CD8-positive, alpha-beta memory T cell (primary cell): ENCODE measurements at regions of chr6 and their contacts with region 1.

Region 1: GRCh38 chr6:142692942-142693341 is 252.0 kb downstream of the HIVEP2 start:
- DNase-seq: peak; percentile 44 to 72 (median 52)
- H3K4me3 ChIP-seq: no peak overlapping the region
- H3K4me3 Mint-ChIP-seq: no peak overlapping the region
- H3K27ac ChIP-seq: no peak overlapping the region
- H3K27ac Mint-ChIP-seq: peak overlapping the region in 3 of 8 donors; percentile 53 to 80 (median 67)
- H3K4me1 ChIP-seq: peaks cover 4% of the 10 kb centered on the region
- H3K4me1 Mint-ChIP-seq: peaks cover 6 to 11% (median 6%) of the 10 kb centered on the region in 3 donors
- H3K27me3 ChIP-seq: no peaks in the 10 kb centered on the region
- H3K27me3 Mint-ChIP-seq: peaks cover 0 to 2% of the 10 kb centered on the region in 2 donors

Region 2: GRCh38 chr6:142952614-142953013 is 259.7 kb after region 1 on chr6:
- CTCF ChIA-PET with region 1: interaction called, 17 read pairs
- POLR2A ChIA-PET with region 1: no interaction called
- DNase-seq: no peak
- H3K4me3 ChIP-seq: no peak overlapping the region
- H3K4me3 Mint-ChIP-seq: no peak overlapping the region
- H3K27ac ChIP-seq: no peak overlapping the region
- H3K27ac Mint-ChIP-seq: peak overlapping the region in 7 of 8 donors; percentile 12 to 84 (median 51)
- H3K4me1 ChIP-seq: peaks cover 8% of the 10 kb centered on the region
- H3K4me1 Mint-ChIP-seq: peaks cover 9 to 19% (median 14%) of the 10 kb centered on the region in 3 donors
- H3K27me3 ChIP-seq: no peaks in the 10 kb centered on the region
- H3K27me3 Mint-ChIP-seq: peaks cover 0 to 1% of the 10 kb centered on the region in 2 donors

Region 3: DNA sequence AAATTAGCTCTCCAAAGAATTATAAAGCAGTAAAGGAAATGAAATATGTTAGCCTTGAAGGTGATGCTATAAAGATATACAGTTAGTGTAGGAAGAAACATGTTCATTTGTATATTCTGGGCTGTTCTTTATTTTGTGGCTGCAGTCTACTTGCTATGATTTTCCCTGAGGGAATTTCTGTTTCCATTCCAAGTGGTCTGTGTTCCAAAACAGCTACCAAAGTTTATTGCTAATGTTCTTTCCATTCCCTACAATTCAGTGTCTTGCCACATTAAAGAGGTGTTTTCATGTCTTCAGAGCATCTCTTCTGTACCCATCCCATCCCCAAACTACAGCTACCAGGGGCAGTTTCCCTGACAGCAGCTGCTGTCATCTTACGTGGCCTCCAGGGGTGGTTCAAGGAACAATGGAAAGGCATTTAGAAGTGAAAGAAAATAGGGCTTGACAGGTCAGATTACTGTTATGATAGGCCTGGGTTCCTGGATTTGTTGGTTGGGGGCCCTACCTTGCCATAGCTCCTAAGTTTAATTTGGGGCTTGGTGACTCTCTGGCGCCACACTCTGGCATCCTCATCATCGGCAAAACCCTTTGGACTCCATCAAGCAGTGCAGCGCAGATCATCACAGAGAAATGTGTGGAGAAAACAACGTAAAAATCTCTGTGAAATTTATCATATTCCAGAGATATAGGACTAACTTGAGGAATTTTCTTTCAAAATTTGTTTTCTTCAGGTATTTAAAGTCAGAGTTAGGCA is 333.9 kb after region 1 on chr6:
- CTCF ChIA-PET with region 1: interaction called, 33 read pairs
- POLR2A ChIA-PET with region 1: no interaction called
- DNase-seq: peak; percentile 20 to 51 (median 35)
- H3K4me3 ChIP-seq: no peak overlapping the region
- H3K4me3 Mint-ChIP-seq: no peak overlapping the region
- H3K27ac ChIP-seq: no peak overlapping the region
- H3K27ac Mint-ChIP-seq: peak overlapping the region in 1 of 8 donors; percentile 89
- H3K4me1 ChIP-seq: no peaks in the 10 kb centered on the region
- H3K4me1 Mint-ChIP-seq: peaks cover 0 to 5% (median 0%) of the 10 kb centered on the region in 3 donors
- H3K27me3 ChIP-seq: no peaks in the 10 kb centered on the region
- H3K27me3 Mint-ChIP-seq: no peaks in the 10 kb centered on the region

Region 4: GRCh38 chr6:143427109-143427817 is 734.3 kb after region 1 on chr6:
- CTCF ChIA-PET with region 1: interaction called, 52 read pairs
- POLR2A ChIA-PET with region 1: no interaction called
- DNase-seq: peak; percentile 55 to 78 (median 63)
- H3K4me3 ChIP-seq: no peak overlapping the region
- H3K4me3 Mint-ChIP-seq: no peak overlapping the region
- H3K27ac ChIP-seq: no peak overlapping the region
- H3K27ac Mint-ChIP-seq: no peak overlapping the region
- H3K4me1 ChIP-seq: no peaks in the 10 kb centered on the region
- H3K4me1 Mint-ChIP-seq: peaks cover 0 to 4% (median 3%) of the 10 kb centered on the region in 3 donors
- H3K27me3 ChIP-seq: no peaks in the 10 kb centered on the region
- H3K27me3 Mint-ChIP-seq: no peaks in the 10 kb centered on the region